ENCODE measurements at regions of chr2 and their contacts with region 1.

Region 1: DNA sequence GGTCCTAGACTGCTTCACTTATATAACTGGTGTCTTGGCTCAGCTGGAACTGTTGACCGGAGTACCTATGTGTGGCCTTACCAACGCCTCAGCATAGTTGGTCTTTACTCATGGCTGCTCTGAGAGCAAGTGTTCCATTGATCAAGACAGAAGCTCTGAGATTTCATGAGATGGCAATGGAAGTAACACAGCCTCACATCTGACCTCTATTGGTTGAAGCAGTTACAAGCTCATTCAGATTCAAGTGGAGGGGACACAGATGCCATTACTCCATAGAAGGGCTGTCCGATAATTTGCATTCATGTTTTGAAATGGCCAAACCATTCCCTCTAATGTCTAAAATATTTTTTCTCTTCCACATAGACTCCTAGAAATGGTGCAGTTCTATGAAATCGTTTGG is 46.4 kb upstream of the STK39 start:
- DNase-seq: no peak
- ATAC-seq: no peak
- H3K4me3 ChIP-seq: no peak overlapping the region
- H3K27ac ChIP-seq: no peak overlapping the region
- H3K4me1 ChIP-seq: no peaks in the 10 kb centered on the region
- H3K27me3 ChIP-seq: no peaks in the 10 kb centered on the region
- CTCF ChIP-seq: 0 out of 2 replicates have a peak, but pooled peaks have one; percentile 2
- POLR2A ChIP-seq: no peak
- RAD21 ChIP-seq: no peak

Region 2: GRCh38 chr2:168136392-168136977 is 157.3 kb before region 1 on chr2:
- CTCF ChIA-PET with region 1: no interaction called
- POLR2A ChIA-PET with region 1: no interaction called
- dilution Hi-C with region 1: no loop called
- in situ Hi-C with region 1: no loop called
- intact Hi-C with region 1: no loop called
- DNase-seq: peak; percentile 48
- ATAC-seq: 0 out of 2 replicates have a peak, but pooled peaks have one; percentile 36
- H3K4me3 ChIP-seq: no peak overlapping the region
- H3K27ac ChIP-seq: no peak overlapping the region
- H3K4me1 ChIP-seq: peaks cover 4% of the 10 kb centered on the region
- H3K27me3 ChIP-seq: no peaks in the 10 kb centered on the region
- CTCF ChIP-seq: peak; percentile 52
- POLR2A ChIP-seq: no peak
- RAD21 ChIP-seq: peak; percentile 47

Region 3: DNA sequence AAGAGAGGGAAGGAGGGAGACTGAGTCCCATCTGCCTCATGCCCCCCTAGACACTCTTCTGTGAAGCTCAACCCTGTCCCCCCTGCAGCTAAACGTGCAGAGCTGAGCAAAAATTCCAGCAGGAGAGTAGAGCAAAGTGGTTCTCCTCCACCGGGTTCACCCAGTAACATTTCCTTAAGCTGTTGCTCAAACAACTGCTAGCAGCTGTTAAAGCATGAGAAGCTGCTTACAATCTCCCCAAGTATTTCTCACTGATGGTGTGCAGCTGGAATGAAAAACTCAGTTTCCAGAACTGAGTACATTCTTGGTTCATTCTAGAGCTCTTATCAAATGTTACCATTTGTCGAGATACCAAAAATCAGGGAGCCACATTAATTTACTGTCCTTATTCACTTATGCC is 138.7 kb before region 1 on chr2:
- CTCF ChIA-PET with region 1: interaction called, 7 read pairs
- POLR2A ChIA-PET with region 1: no interaction called
- dilution Hi-C with region 1: no loop called
- in situ Hi-C with region 1: no loop called
- intact Hi-C with region 1: loop called (anchors 1 kb)
- DNase-seq: peak; percentile 79
- ATAC-seq: peak; percentile 70
- H3K4me3 ChIP-seq: no peak overlapping the region
- H3K27ac ChIP-seq: peak overlapping the region; percentile 83; the same call in 1 of the 2 replicates
- H3K4me1 ChIP-seq: peaks cover 15% of the 10 kb centered on the region
- H3K27me3 ChIP-seq: no peaks in the 10 kb centered on the region
- CTCF ChIP-seq: no peak
- POLR2A ChIP-seq: no peak
- RAD21 ChIP-seq: no peak

Region 4: GRCh38 chr2:168278424-168278888 is 15.3 kb before region 1 on chr2:
- CTCF ChIA-PET with region 1: interaction called, 10 read pairs
- POLR2A ChIA-PET with region 1: no interaction called
- dilution Hi-C with region 1: no loop called
- in situ Hi-C with region 1: no loop called
- intact Hi-C with region 1: no loop called
- DNase-seq: peak; percentile 31
- ATAC-seq: no peak; the same call in 1 of the 2 replicates
- H3K4me3 ChIP-seq: no peak overlapping the region
- H3K27ac ChIP-seq: no peak overlapping the region
- H3K4me1 ChIP-seq: no peaks in the 10 kb centered on the region
- H3K27me3 ChIP-seq: no peaks in the 10 kb centered on the region
- CTCF ChIP-seq: no peak
- POLR2A ChIP-seq: no peak
- RAD21 ChIP-seq: no peak

Region 5: DNA sequence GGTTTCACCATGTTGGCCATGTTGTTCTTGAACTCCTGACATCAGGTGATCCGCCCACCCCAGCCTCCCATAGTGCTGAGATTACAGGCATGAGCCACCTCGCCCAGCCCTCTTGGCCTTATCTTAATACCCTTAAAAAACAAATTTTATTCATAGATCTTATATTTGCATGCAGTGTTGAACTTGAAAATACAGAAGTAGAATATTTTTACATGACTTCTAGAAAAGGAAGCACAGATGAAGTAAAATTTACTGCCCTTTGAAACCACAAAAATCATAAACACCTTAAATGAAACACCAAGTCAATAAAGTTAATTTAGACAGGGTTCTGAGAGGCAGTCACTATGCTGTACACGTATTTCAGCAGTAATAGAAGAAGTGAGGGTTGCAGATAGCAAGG is 308.0 kb after region 1 on chr2:
- CTCF ChIA-PET with region 1: no interaction called
- POLR2A ChIA-PET with region 1: no interaction called
- dilution Hi-C with region 1: no loop called
- in situ Hi-C with region 1: no loop called
- intact Hi-C with region 1: no loop called
- DNase-seq: no peak
- ATAC-seq: no peak
- H3K4me3 ChIP-seq: no peak overlapping the region
- H3K27ac ChIP-seq: no peak overlapping the region
- H3K4me1 ChIP-seq: no peaks in the 10 kb centered on the region
- H3K27me3 ChIP-seq: no peaks in the 10 kb centered on the region
- CTCF ChIP-seq: no peak
- POLR2A ChIP-seq: no peak
- RAD21 ChIP-seq: no peak